ENCODE measurements at regions of chr5 and their contacts with region 1.

Region 1: DNA sequence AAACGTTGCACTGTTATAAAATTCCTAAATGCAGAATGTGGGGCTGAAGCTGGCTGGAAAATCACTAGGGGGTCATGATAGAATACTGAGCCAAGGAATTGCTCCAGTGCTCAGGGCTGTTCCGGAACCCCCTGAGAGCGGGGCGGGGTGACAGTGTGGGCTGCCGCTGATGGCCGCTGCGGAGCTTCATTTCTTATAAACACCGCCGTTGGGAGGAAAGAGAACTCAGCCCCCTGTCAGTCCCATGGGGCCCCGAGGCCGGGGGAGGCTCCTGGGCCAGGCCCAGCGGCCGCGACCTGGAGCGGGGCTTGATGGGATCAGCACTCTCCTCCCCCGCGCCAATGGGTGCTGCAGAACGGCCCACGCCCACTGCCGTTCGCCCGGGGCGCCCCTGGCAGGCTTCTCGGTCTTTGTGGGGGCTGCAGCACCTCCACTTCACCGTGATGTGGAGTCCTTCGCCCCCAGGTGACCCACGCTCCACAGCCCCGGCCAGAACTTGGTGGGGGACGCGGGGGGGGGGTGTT is 5.2 kb upstream of the IRF1 start:
- DNase-seq: peak; percentile 50 to 76 (median 63)
- H3K4me3 ChIP-seq: peak overlapping the region; percentile 79
- H3K4me3 Mint-ChIP-seq: peak overlapping the region; percentile 88 to 99 (median 97)
- H3K27ac ChIP-seq: peak overlapping the region; percentile 82
- H3K27ac Mint-ChIP-seq: peak overlapping the region; percentile 96 to 100 (median 98)
- H3K4me1 ChIP-seq: peaks cover 72% of the 10 kb centered on the region
- H3K4me1 Mint-ChIP-seq: peaks cover 67 to 84% (median 78%) of the 10 kb centered on the region in 3 donors
- H3K27me3 ChIP-seq: no peaks in the 10 kb centered on the region
- H3K27me3 Mint-ChIP-seq: peaks cover 0 to 2% of the 10 kb centered on the region in 2 donors

Region 2: DNA sequence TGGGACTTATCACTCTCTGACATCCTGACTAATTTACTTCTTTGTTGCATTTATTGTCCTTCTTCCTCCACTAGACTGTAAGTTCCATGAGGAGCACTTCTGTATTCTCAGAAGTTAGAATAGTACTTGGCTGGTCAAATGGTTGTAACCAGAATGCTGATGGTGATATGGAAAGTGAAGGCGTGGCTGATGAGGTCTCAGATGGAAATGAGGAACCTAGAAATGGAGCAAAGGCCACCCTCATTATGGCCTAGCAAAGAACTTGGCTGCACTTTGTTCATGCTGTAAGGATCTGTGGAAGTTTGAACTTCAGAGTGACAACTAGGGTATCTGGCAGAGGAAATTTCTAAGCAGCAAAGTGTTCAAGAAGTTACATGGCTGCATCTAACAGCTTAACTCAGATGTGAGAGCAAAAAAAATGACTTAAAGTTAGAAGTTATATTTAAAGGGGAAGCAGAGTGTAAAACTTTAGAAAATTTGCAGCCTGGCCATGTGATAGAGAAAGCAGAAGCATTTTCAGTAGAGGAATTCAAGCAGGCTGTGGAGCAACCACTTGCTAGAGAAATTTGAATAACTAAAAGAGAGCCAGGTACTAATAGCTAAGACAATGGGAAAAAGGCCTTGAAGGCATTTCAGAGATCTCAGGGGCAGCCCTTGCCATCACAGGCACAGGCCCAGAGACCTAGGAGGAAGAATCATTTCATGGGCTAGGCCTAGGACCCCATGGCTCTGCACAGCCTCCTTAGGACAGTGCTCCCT is 141.2 kb before region 1 on chr5:
- CTCF ChIA-PET with region 1: no interaction called
- POLR2A ChIA-PET with region 1: no interaction called
- DNase-seq: no peak
- H3K4me3 ChIP-seq: no peak overlapping the region
- H3K4me3 Mint-ChIP-seq: no peak overlapping the region
- H3K27ac ChIP-seq: no peak overlapping the region
- H3K27ac Mint-ChIP-seq: no peak overlapping the region
- H3K4me1 ChIP-seq: no peaks in the 10 kb centered on the region
- H3K4me1 Mint-ChIP-seq: no peaks in the 10 kb centered on the region
- H3K27me3 ChIP-seq: no peaks in the 10 kb centered on the region
- H3K27me3 Mint-ChIP-seq: peaks cover 0 to 5% of the 10 kb centered on the region in 2 donors

Region 3: DNA sequence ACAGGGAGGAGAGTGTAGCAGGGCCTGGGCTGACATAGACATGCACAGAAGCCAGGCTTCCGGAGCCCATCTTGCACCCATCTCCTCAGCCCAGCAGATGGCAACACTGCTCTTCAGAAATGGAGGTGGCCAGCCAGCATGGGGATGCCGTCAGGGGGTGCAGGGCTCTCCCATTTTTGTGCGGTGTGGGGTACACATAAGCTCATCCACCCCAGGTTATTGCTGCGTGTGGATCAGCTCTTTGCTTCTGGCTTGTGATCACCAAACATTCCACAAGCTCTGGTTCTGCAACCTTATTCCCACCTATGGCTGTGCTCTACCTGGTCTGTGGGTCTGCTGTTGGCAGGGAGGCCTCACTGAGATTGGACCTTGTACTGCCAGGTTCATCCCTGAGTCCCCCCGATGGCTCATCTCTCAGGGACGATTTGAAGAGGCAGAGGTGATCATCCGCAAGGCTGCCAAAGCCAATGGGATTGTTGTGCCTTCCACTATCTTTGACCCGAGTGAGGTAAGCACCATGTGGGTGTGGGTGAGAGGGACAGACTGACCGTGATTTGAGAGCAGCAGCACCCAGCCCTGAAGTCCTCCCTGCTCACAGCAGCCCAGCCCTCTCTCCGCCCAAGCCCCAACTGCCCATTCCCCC is 109.0 kb before region 1 on chr5:
- CTCF ChIA-PET with region 1: interaction called, 299 read pairs
- POLR2A ChIA-PET with region 1: interaction called, 7 read pairs
- DNase-seq: peak; percentile 60 to 86 (median 72)
- H3K4me3 ChIP-seq: no peak overlapping the region
- H3K4me3 Mint-ChIP-seq: peak overlapping the region in 1 of 7 donors; percentile 56
- H3K27ac ChIP-seq: no peak overlapping the region
- H3K27ac Mint-ChIP-seq: peak overlapping the region in 6 of 8 donors; percentile 7 to 85 (median 53)
- H3K4me1 ChIP-seq: peaks cover 19% of the 10 kb centered on the region
- H3K4me1 Mint-ChIP-seq: peaks cover 20 to 37% (median 23%) of the 10 kb centered on the region in 3 donors
- H3K27me3 ChIP-seq: no peaks in the 10 kb centered on the region
- H3K27me3 Mint-ChIP-seq: no peaks in the 10 kb centered on the region

Region 4: DNA sequence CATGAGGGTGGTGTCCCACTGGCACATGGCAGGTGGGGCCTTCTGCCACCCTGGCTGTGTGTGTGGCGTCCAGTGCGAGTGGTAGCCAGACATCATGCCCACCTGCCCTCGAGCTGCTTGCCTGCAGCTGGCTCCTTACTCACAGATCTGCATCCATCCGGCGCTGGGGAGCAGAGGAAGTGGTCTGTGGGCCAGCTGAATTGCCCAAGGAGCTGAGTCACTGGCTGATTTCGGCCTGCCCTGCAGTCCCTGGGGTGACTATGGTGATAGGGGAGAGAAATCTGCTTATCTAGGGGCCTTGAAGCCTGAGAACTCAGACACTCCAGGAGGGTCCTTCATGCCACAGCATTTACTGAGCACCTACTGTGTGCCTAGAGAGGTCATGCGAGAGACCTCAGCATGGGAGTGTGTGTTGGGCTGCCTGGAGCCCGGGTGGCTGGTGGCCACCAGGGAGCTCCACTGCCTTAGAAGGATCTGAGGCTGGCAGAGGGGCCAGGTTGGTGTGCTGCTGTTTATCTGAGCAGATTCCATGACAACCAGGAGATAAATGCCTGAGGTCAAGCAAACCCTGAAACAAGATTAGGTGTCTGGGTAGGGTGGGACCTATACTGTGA is 69.1 kb before region 1 on chr5:
- CTCF ChIA-PET with region 1: interaction called, 112 read pairs
- POLR2A ChIA-PET with region 1: interaction called, 85 read pairs
- DNase-seq: peak; percentile 37 to 83 (median 52)
- H3K4me3 ChIP-seq: peak overlapping the region; percentile 57
- H3K4me3 Mint-ChIP-seq: peak overlapping the region; percentile 61 to 89 (median 79)
- H3K27ac ChIP-seq: peak overlapping the region; percentile 84
- H3K27ac Mint-ChIP-seq: peak overlapping the region; percentile 95 to 99 (median 98)
- H3K4me1 ChIP-seq: peaks cover 100% of the 10 kb centered on the region
- H3K4me1 Mint-ChIP-seq: peaks cover 96 to 98% (median 97%) of the 10 kb centered on the region in 3 donors
- H3K27me3 ChIP-seq: no peaks in the 10 kb centered on the region
- H3K27me3 Mint-ChIP-seq: no peaks in the 10 kb centered on the region

Region 5: DNA sequence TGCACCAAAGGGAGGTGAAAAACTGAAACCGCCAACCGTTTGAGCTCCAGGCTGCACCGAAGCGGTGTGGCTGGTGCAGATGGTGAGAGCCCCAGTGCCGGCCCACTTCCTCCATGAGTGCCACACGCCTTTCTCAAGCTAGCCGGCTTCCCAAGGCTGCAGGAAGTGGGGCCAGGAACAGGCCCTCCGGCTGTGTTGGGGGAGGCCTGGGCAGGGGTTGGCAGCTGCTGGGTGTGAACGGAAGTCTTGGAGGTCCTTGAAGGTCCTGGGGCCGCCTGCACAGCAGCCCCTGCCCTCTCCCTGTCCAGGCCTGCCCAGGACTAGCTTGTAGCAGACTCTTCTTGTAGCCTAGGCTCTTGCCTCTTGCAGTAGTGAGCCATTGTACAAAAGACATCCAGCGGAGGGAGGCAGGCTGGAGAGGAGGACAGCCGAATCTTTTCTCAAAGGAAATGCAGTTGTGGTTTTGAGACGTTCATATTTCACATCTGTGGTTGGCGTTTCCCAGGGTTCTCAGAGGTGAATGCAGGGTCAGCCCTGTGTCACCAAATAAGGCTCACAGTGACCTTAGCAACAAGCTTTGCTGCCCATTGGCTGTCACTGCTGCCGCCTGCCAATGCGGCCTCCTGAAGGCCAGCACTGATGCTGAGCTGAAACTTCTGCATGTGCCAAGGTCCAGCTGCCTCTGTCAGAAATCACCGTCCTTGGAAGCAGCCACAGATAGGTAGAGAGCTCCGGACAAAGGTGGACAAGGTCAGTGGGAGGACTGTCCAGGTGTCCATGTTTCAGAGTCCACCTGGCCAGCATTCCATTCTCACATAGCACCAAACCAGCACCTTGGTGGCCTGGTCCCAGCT is 29.1 kb before region 1 on chr5:
- CTCF ChIA-PET with region 1: interaction called, 222 read pairs
- POLR2A ChIA-PET with region 1: interaction called, 60 read pairs
- DNase-seq: peak; percentile 63 to 88 (median 78)
- H3K4me3 ChIP-seq: peak overlapping the region; percentile 57
- H3K4me3 Mint-ChIP-seq: peak overlapping the region; percentile 72 to 92 (median 82)
- H3K27ac ChIP-seq: peak overlapping the region; percentile 64
- H3K27ac Mint-ChIP-seq: peak overlapping the region; percentile 87 to 100 (median 98)
- H3K4me1 ChIP-seq: peaks cover 95% of the 10 kb centered on the region
- H3K4me1 Mint-ChIP-seq: peaks cover 98 to 100% (median 99%) of the 10 kb centered on the region in 3 donors
- H3K27me3 ChIP-seq: no peaks in the 10 kb centered on the region
- H3K27me3 Mint-ChIP-seq: no peaks in the 10 kb centered on the region

Measured in CD8-positive, alpha-beta memory T cell (primary cell).